ENCODE measurements at regions of chr3 and their contacts with region 1.

Region 1: GRCh38 chr3:51538459-51539290 is at the start of gene RAD54L2:
- DNase-seq: peak; percentile 75
- ATAC-seq: peak; percentile 87
- H3K4me3 Mint-ChIP-seq: peak within 1 kb of the TSS; percentile 83
- H3K27ac Mint-ChIP-seq: peak within 1 kb of the TSS; percentile 89
- H3K4me1 Mint-ChIP-seq: peaks cover 22% of the 10 kb centered on the region
- H3K27me3 Mint-ChIP-seq: no peaks in the 10 kb centered on the region
- CTCF ChIP-seq: peak; percentile 30
- total RNA-seq, gene RAD54L2: 24.1 to 24.6 TPM

Region 2: DNA sequence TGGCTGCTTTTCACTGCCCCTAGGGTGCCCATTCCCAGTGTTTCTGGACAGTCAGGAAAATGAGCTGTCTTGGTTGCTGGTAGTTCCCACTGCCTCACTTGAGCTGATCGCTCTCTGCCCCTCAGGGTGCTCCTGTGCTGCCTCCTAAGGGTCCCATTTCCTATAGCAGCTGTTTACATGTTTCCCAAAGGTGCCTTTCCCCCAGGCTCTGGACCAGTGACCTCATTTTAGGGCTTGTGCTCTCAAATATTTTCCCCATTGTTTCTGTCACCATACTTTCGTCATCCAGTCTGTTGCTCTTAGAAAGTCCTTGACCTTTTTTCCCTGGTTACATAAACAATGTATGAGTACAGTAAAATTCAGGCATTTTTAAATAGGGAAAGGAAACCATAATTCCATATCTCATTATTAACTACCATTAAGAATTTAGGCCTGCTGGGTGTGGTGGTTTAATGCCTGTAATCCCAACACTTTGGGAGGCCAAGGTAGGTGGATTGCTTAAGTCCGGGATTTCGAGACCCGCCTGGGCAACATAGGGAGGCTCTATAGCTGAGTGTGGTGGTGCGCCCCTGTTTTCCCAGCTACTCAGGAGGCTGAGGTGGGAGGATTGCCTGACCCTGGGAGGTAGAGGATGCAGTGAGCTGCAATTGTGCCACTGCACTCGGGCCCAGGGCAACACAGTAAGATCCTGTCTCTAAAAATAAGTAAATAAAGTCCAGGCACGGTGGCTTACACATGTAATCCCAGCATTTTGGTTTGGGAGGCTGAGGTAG is 11.6 kb after region 1 on chr3:
- CTCF ChIA-PET with region 1: no interaction called
- POLR2A ChIA-PET with region 1: interaction called, 13 read pairs
- intact Hi-C with region 1: no loop called
- DNase-seq: no peak
- ATAC-seq: no peak
- H3K4me3 Mint-ChIP-seq: no peak overlapping the region
- H3K27ac Mint-ChIP-seq: no peak overlapping the region
- H3K4me1 Mint-ChIP-seq: no peaks in the 10 kb centered on the region
- H3K27me3 Mint-ChIP-seq: no peaks in the 10 kb centered on the region
- CTCF ChIP-seq: no peak

Measured in activated CD8-positive, alpha-beta T cell treated with anti-CD3 and anti-CD28 coated beads for 36 hours (primary cell).